ENCODE measurements at regions of chr19 and their contacts with region 1.

Region 1: GRCh38 chr19:50804420-50805272 is 14.4 kb downstream of the ACP4 start:
- DNase-seq: peak; percentile 99
- H3K4me3 ChIP-seq: peak overlapping the region; percentile 69 to 94 (median 74)
- H3K27ac ChIP-seq: peak overlapping the region; percentile 83 to 95 (median 92)
- H3K4me1 ChIP-seq: peaks cover 1 to 24% (median 18%) of the 10 kb centered on the region in 4 donors
- H3K27me3 ChIP-seq: no peaks in the 10 kb centered on the region
- CTCF ChIP-seq: no peak
- EP300 ChIP-seq: peak in 1 of 4 donors; percentile 8
- POLR2A ChIP-seq: peak; percentile 56 to 62

Region 2: GRCh38 chr19:50376166-50377050 is 428.2 kb before region 1 on chr19 and contains the start of gene NR1H2:
- intact Hi-C with region 1: loop called (anchors 5 kb)
- DNase-seq: peak; percentile 98
- H3K4me3 ChIP-seq: peak within 1 kb of the TSS; percentile 65 to 99 (median 93)
- H3K27ac ChIP-seq: peak within 1 kb of the TSS; percentile 92 to 100 (median 99)
- H3K4me1 ChIP-seq: peaks cover 0 to 17% (median 9%) of the 10 kb centered on the region in 4 donors
- H3K27me3 ChIP-seq: no peaks in the 10 kb centered on the region
- CTCF ChIP-seq: no peak
- EP300 ChIP-seq: peak in 1 of 4 donors; percentile 70
- POLR2A ChIP-seq: peak; percentile 82 to 85
- total RNA-seq, gene NR1H2: 92.5 to 143 (median 109) TPM

Region 3: GRCh38 chr19:50896591-50897190 is 92.0 kb after region 1 on chr19:
- intact Hi-C with region 1: no loop called
- DNase-seq: no peak
- H3K4me3 ChIP-seq: no peak overlapping the region
- H3K27ac ChIP-seq: no peak overlapping the region
- H3K4me1 ChIP-seq: peaks cover 0 to 4% (median 0%) of the 10 kb centered on the region in 4 donors
- H3K27me3 ChIP-seq: peaks cover 0 to 13% (median 0%) of the 10 kb centered on the region in 3 donors
- CTCF ChIP-seq: no peak
- EP300 ChIP-seq: no peak
- POLR2A ChIP-seq: no peak

Measured in sigmoid colon (tissue), 7 donors.